GM13976 (cell line): ENCODE measurements at regions of chr10 and their contacts with region 1.

Region 1: GRCh38 chr10:93386631-93387369 is 95.3 kb downstream of the MYOF start:
- DNase-seq: peak; percentile 24
- CTCF ChIP-seq: no peak

Region 2: DNA sequence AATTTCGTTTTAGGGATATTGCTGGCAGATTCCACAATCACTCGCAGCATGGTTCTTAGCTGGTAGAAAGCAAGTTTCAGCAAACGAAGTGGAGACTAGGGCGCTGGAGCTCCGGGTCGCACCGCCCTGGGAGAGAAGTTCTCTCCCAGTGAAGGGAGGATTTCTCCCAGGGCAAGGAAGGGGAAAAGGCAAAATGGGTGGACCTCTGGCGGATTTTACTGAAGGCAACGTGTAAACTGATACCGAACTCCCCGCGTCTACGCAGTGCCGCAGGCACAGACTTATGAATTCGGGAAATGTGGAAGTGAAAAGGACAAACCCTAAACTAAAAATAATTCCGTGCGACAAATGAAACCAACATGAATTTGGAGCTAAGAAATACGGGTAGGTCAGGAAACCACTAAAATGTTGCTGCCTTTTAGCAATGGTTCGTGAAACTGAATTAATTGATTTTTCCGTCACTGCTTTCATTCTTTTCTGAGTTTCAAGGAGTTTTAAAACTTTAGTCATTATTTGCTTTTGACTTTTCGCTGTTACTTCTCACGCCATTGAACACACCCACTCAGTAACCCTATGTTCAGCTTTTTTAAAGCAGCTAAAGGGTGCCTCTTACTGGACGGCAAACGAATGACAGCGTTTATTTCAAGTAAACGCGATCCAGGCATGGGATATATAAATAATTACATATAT is 95.5 kb after region 1 on chr10 and contains the start of gene MYOF:
- in situ Hi-C with region 1: loop called (anchors 10 kb)
- DNase-seq: peak; percentile 71
- CTCF ChIP-seq: peak; percentile 64

Region 3: GRCh38 chr10:93566435-93567276 is 179.9 kb after region 1 on chr10 and contains the start of gene FFAR4:
- in situ Hi-C with region 1: no loop called
- DNase-seq: no peak
- CTCF ChIP-seq: no peak